ENCODE measurements at regions of chr2 and their contacts with region 1.

Region 1: DNA sequence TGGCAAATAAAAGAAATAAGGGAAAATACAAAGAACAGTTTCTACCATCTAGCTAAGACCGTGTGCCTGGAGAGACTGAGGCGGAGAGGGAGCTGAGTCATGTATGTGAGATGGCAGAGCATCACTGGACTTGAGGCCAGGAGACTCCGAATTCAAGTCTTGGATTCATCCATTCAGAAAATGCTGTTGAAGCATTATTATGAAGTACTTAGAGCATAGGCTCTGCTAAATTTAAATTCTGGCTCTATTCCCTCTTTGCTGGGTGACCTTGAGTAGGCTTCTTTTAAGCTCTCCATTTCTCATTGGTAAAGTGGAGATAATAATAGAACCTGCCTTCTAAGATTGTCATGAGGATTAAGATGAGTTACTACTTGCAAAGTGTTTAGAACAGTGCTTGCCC is 34.7 kb downstream of the NPHP1 start:
- DNase-seq: peak; percentile 15 to 60
- ATAC-seq: peak; percentile 88 to 92
- H3K4me3 ChIP-seq: peak overlapping the region; percentile 56 to 59 (median 58)
- H3K27ac ChIP-seq: peak overlapping the region; percentile 86 to 93 (median 88)
- H3K4me1 ChIP-seq: peaks cover 39 to 43% of the 10 kb centered on the region in 2 donors
- H3K27me3 ChIP-seq: no peaks in the 10 kb centered on the region
- CTCF ChIP-seq: no peak
- POLR2A ChIP-seq: peak; percentile 23 to 66

Region 2: GRCh38 chr2:108933691-108934117 is 1236.4 kb before region 1 on chr2:
- in situ Hi-C with region 1: no loop called
- intact Hi-C with region 1: no loop called
- DNase-seq: no peak
- ATAC-seq: no peak
- H3K4me3 ChIP-seq: no peak overlapping the region
- H3K27ac ChIP-seq: no peak overlapping the region
- H3K4me1 ChIP-seq: peaks cover 0 to 2% of the 10 kb centered on the region in 2 donors
- H3K27me3 ChIP-seq: no peaks in the 10 kb centered on the region
- CTCF ChIP-seq: no peak
- POLR2A ChIP-seq: no peak

Region 3: GRCh38 chr2:109663721-109664120 is 506.4 kb before region 1 on chr2:
- in situ Hi-C with region 1: no loop called
- intact Hi-C with region 1: no loop called
- DNase-seq: peak in 1 of 2 donors; percentile 14
- ATAC-seq: peak; percentile 65 to 74
- H3K4me3 ChIP-seq: no peak overlapping the region
- H3K27ac ChIP-seq: no peak overlapping the region
- H3K4me1 ChIP-seq: peaks cover 4 to 6% of the 10 kb centered on the region in 2 donors
- H3K27me3 ChIP-seq: no peaks in the 10 kb centered on the region
- CTCF ChIP-seq: no peak
- POLR2A ChIP-seq: no peak

Region 4: GRCh38 chr2:110143982-110144381 is 26.1 kb before region 1 on chr2:
- in situ Hi-C with region 1: no loop called
- intact Hi-C with region 1: no loop called
- DNase-seq: no peak
- ATAC-seq: no peak
- H3K4me3 ChIP-seq: no peak overlapping the region
- H3K27ac ChIP-seq: no peak overlapping the region
- H3K4me1 ChIP-seq: no peaks in the 10 kb centered on the region
- H3K27me3 ChIP-seq: no peaks in the 10 kb centered on the region
- CTCF ChIP-seq: no peak
- POLR2A ChIP-seq: no peak

Region 5: DNA sequence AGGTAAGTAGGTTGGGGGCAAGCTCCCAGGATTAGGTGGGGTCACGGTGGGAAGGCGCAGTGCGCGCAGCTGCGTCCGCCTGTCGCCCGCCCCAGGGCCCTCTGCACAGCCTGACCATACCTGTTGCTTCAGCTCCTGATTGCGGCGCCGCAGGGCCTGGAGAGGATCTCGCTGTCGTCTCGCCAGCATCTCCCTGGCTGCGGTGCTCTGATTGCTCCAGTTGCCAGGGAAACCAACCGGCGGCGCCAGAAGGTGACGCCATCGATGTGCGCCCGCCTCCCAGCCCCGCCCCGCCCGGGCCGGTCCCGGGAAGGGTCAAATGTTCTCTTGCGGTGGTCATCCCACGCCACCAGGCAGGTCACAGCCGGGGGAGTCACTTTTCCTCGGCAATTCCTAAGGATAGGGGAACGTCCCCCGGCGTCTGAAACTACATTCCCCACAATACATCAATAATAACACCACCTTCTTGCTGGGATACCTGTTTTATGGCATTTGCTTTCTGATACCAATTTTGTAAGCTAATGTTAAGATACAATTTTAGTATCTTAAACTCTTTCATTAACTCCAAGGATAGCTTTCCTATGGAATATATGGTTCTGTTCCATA is 34.8 kb after region 1 on chr2 and contains the start of gene NPHP1:
- in situ Hi-C with region 1: no loop called
- intact Hi-C with region 1: loop called (anchors 1 kb)
- DNase-seq: peak; percentile 77 to 91
- ATAC-seq: peak; percentile 80 to 84
- H3K4me3 ChIP-seq: peak within 1 kb of the TSS; percentile 65 to 79 (median 70)
- H3K27ac ChIP-seq: peak within 1 kb of the TSS; percentile 76 to 94 (median 86)
- H3K4me1 ChIP-seq: peaks cover 16 to 40% of the 10 kb centered on the region in 2 donors
- H3K27me3 ChIP-seq: no peaks in the 10 kb centered on the region
- CTCF ChIP-seq: peak in 1 of 5 experiments; percentile 45
- POLR2A ChIP-seq: peak; percentile 84 to 88
- total RNA-seq, gene NPHP1: 3.8 to 10.3 (median 4.6) TPM

Region 6: GRCh38 chr2:110215566-110216158 is 45.6 kb after region 1 on chr2:
- in situ Hi-C with region 1: no loop called
- intact Hi-C with region 1: loop called (anchors 2 kb)
- DNase-seq: peak; percentile 44 to 58
- ATAC-seq: peak; percentile 79 to 80
- H3K4me3 ChIP-seq: no peak overlapping the region
- H3K27ac ChIP-seq: peak overlapping the region; percentile 77 to 94 (median 82)
- H3K4me1 ChIP-seq: peaks cover 47 to 48% of the 10 kb centered on the region in 2 donors
- H3K27me3 ChIP-seq: no peaks in the 10 kb centered on the region
- CTCF ChIP-seq: no peak
- POLR2A ChIP-seq: no peak

Region 7: DNA sequence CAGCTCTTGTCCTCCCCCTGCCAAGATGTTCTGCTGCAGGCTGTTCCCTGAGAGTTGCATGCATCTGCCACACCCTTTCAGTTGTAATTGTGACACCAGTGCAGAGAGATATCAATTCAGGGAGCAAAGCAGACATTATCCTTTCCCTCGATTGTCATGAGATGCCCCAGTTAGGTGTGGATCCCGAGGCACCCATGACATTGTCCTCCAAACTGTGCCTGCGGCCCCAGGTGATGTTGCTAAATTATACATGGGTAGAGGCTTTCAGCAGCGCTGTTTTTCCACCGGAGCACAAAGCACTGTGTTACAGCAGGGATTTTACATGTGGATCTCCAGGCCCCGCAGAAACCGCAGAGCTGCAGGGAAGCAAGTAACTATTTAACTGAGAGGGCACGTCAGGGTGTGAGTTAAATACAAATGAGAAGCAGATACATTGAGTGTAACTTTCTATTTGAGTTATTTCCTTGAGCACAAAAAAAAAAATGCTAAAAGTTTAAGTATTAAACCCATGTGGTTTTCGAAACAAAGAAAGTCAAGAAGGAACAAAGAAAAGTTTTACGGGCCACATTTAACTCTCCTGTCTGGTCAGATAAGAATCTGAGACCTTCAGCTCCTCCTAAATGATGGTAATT is 860.3 kb after region 1 on chr2:
- in situ Hi-C with region 1: no loop called
- intact Hi-C with region 1: no loop called
- DNase-seq: no peak
- ATAC-seq: no peak
- H3K4me3 ChIP-seq: no peak overlapping the region
- H3K27ac ChIP-seq: no peak overlapping the region
- H3K4me1 ChIP-seq: peaks cover 0 to 11% of the 10 kb centered on the region in 2 donors
- H3K27me3 ChIP-seq: no peaks in the 10 kb centered on the region
- CTCF ChIP-seq: no peak
- POLR2A ChIP-seq: no peak

Measured in gastrocnemius medialis (tissue), 4 donors.